Left ventricle myocardium superior (tissue), 1 donor: ENCODE measurements at regions of chr2 and their contacts with region 1.

Region 1: DNA sequence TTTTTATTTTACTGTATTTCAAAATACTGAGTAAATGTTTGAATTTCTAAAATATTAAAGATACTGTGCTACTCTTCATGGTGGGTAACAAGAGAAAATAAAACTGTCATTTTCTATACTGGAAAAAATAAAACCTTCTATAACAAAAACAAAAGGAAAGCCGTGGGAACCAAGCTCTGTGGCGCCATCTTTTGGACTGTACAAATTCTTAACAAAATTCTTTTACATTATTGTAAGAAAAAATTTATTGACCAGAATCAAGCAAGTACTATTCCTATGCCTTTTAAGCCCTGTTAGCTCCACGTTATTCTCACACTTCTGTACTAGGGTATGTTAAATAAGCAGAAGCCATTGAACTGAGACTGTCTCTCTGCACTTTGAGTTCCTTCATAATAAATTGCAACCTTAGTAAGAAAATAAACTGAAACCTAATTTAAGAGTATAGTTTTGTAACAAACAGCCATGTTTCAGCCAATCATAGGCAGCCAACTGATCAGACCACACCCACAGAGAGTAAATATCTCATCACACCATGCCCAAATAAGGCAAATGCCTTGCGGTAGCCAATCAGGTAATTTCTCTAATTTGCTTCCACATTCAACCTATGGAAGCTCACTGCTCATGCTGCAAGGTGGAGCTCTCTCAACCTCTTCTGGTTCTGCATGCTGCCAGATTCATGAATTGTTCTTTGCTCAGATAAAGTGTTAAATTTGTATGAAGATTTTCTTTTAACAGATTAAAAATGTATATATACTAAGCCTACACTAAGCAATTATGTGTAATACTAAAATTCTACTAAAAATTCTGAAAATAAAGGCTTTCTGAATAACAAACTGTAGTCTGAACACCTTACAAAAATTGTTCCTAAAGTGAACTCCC is 42.2 kb downstream of the HIBCH start:
- DNase-seq: no peak
- ATAC-seq: no peak

Region 2: DNA sequence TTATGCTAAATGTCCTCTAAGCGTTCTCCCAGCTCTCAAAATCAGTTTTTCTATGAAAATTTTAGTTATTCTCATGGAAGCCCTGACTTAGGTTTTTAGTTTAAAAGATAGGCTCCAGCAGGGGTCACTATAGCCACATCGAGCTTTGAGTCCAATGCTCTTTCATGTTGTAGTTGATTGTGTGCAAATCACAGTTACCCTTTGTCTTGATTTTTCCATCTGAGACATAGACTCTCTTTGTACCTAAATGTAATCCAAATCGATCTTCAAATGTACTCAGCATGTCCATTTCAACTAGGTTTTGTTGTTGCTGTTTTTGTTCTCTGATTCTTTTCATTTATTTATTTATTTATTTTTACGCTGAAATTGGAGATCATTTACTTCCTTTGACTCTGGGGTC is 188.6 kb before region 1 on chr2:
- intact Hi-C with region 1: loop called (anchors 5 kb)
- DNase-seq: no peak
- ATAC-seq: peak; percentile 69

Region 3: GRCh38 chr2:190197143-190197720 is 80.2 kb before region 1 on chr2:
- intact Hi-C with region 1: no loop called
- DNase-seq: no peak
- ATAC-seq: no peak